Activated naive CD4-positive, alpha-beta T cell treated with anti-CD3 and anti-CD28 coated beads, Interleukin-2, amount 10 ng/mL, durations not matched to agents 7 days and 5 days (primary cell): ENCODE measurements at regions of chr22 and their contacts with region 1.

Region 1: DNA sequence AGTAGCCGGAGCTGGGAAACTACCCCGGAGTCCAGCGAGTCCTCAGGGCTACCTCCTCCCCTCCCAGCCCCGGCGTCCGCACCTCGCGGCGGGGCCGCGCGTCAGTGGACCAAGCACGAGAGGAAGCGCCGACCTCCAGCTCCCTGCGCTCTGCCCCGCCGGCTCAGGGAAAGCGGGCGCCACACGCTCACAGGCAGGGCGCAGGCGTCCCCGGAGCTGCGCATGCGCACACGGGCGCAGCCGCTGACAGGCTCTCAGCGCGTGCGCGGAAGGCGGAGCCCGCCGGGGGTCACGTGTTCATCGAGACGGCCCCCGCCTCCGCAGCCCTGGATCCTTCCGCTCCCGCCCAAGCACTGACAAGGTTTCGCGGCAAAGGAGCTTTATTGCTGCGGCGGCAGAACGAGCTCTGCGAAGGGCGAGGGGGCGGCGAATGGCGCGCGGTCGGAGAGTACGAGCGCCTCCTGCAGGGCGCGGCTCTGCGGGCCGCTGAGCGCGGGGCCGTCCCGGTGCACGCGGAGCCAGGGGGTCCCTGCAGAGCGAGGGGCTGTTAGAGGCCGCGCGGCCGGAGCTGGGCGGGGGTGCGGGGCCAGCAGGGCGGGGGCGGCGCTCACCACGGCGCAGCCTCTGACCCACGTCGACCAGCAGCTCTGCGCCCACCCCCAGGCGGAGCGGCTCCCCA is at the start of gene SCO2:
- DNase-seq: peak; percentile 98
- H3K4me3 Mint-ChIP-seq: peak within 1 kb of the TSS; percentile 88
- H3K27ac Mint-ChIP-seq: peak within 1 kb of the TSS; percentile 96
- H3K4me1 Mint-ChIP-seq: peaks cover 38% of the 10 kb centered on the region
- H3K27me3 Mint-ChIP-seq: peaks cover 1% of the 10 kb centered on the region

Region 2: GRCh38 chr22:50507991-50508884 is 17.3 kb before region 1 on chr22 and contains the start of gene NCAPH2:
- CTCF ChIA-PET with region 1: interaction called, 14 read pairs
- DNase-seq: peak; percentile 97
- H3K4me3 Mint-ChIP-seq: peak within 1 kb of the TSS; percentile 93
- H3K27ac Mint-ChIP-seq: peak within 1 kb of the TSS; percentile 96
- H3K4me1 Mint-ChIP-seq: peaks cover 34% of the 10 kb centered on the region
- H3K27me3 Mint-ChIP-seq: no peaks in the 10 kb centered on the region

Region 3: DNA sequence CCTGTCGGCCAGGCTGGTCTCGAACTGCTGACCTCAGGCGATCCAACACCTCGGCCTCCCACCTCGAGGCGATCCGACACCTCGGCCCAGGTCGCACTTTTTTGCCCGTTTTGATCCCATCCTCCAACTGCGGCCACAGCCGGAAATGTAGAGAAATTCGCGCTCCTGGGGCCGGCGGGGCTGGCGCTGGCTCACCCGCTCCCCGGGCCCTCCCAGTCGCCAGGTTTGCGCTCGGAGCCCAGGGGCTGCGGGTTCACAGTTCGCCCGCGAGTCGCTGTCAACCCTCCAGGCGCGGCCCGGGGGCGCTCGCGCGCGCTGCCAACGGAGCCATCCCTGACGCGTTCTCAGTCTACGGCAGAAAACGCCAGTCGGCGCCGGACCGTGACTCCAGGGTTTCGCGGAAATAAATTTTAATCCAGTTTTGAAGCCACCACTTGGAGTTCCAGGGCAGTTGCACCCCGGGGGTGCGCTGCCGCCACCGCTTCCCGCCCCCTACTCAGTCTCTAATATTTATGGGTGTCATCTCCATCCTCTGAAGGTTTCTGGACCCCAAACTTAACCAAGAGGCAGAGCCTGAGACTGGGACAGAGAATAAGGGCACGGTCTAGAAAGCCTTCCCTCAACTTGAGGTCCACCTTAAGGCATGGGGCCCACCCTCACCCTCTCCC is 18.7 kb after region 1 on chr22:
- CTCF ChIA-PET with region 1: interaction called, 18 read pairs
- DNase-seq: peak; percentile 88
- H3K4me3 Mint-ChIP-seq: peak overlapping the region; percentile 53
- H3K27ac Mint-ChIP-seq: peak overlapping the region; percentile 85
- H3K4me1 Mint-ChIP-seq: peaks cover 62% of the 10 kb centered on the region
- H3K27me3 Mint-ChIP-seq: no peaks in the 10 kb centered on the region

Region 4: DNA sequence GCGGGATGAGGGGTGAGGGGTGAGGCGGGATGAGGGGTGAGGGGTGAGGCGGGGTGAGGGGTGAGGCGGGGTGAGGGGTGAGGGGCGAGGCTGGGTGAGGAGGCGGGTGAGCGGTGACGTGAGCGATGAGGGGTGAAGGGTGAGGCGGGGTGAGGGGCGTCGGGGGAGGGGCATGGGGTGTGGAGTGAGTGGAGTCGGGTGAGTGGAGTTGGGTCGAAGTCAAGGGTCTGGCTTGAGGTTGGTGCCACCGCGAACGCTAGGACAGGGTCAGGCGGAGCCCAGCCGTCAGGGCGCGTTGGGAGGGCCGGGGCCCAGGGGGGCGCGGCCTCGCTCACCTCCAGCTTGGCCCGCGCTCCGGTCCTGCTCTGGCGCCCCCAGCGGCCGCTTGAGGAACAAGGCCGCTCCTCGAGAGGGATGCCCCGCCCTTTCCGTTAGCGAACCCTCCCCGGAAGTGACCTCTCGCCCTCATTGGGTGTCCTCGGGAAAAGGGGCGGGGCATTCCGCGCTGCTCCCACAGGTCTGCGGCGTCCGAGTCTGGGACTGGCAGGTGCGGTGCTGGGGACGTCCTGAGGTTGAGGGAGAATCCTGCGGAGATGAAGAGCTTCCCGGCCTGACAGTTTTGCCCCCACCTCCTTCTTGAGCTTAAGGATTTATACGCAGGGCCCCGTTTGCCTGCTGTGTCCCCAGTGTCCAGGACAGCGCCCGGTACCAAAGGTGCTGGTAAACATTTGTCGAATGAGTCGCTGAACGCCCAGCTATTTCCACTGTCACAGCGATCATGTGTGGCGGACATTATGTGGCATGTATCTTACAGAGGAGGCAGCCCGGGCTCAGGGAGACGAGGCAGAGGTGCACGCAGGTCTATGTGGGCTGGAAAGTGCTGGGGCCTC is 37.2 kb after region 1 on chr22 and contains the start of gene SYCE3:
- CTCF ChIA-PET with region 1: interaction called, 28 read pairs
- DNase-seq: peak; percentile 98
- H3K4me3 Mint-ChIP-seq: peak within 1 kb of the TSS; percentile 83
- H3K27ac Mint-ChIP-seq: peak within 1 kb of the TSS; percentile 83
- H3K4me1 Mint-ChIP-seq: peaks cover 22% of the 10 kb centered on the region
- H3K27me3 Mint-ChIP-seq: peaks cover 66% of the 10 kb centered on the region

Region 5: GRCh38 chr22:50620593-50621355 is 95.2 kb after region 1 on chr22:
- CTCF ChIA-PET with region 1: interaction called, 46 read pairs
- DNase-seq: peak; percentile 86
- H3K4me3 Mint-ChIP-seq: peak overlapping the region; percentile 85
- H3K27ac Mint-ChIP-seq: peak overlapping the region; percentile 100
- H3K4me1 Mint-ChIP-seq: peaks cover 46% of the 10 kb centered on the region
- H3K27me3 Mint-ChIP-seq: no peaks in the 10 kb centered on the region